ENCODE measurements at regions of chr1 and their contacts with region 1.

Region 1: GRCh38 chr1:7646981-7647901 is 123.9 kb upstream of the VAMP3 start:
- DNase-seq: peak; percentile 26
- H3K4me3 ChIP-seq: no peak overlapping the region
- H3K27ac ChIP-seq: no peak overlapping the region
- H3K4me1 ChIP-seq: peaks cover 7% of the 10 kb centered on the region
- H3K27me3 ChIP-seq: peaks cover 1% of the 10 kb centered on the region
- CTCF ChIP-seq: peak; percentile 61 to 93

Region 2: GRCh38 chr1:7042322-7043190 is 604.7 kb before region 1 on chr1:
- CTCF ChIA-PET with region 1: no interaction called
- dilution Hi-C with region 1: no loop called
- in situ Hi-C with region 1: loop called (anchors 25 kb)
- intact Hi-C with region 1: loop called (anchors 1 kb)
- DNase-seq: peak; percentile 24
- H3K4me3 ChIP-seq: no peak overlapping the region
- H3K27ac ChIP-seq: no peak overlapping the region
- H3K4me1 ChIP-seq: peaks cover 5% of the 10 kb centered on the region
- H3K27me3 ChIP-seq: no peaks in the 10 kb centered on the region
- CTCF ChIP-seq: peak; percentile 57 to 59

Region 3: DNA sequence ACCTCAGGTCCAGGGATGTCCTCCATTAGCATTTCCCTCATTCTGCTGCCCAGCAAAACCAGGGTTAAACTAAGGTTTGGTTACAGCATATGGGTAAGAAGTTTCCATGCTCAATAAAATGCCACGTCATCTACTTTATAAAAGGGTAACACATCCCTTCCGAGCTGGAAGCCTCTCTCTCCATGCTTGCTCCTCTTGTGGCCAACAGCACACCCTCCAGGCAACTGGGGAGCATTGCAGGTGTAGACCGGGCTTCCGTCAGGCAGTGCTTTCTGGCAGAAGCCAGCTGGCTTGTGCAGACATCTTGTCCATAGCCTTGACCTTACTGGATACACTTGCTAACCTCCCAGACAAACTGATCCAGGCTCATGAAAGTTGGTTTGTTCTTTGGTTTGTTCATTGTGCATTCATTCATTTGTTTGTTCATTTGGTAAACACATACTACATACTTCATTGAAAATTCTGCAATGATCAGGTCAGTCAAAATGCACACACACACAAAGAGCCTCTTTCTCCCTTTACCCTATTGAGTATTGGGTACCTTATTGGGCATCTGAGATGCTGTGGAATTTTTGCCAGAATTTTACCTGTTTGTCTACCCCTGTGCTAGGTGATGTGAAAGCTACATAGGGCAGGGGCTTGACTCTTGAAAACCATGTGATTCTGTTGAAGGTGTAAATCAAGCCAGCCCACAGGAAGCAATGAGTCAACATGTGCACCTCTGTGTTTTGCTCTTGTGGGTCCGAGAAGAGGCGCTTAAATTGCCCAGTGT is 439.2 kb before region 1 on chr1:
- CTCF ChIA-PET with region 1: no interaction called
- dilution Hi-C with region 1: no loop called
- in situ Hi-C with region 1: no loop called
- intact Hi-C with region 1: loop called (anchors 1 kb)
- DNase-seq: peak; percentile 64
- H3K4me3 ChIP-seq: no peak overlapping the region
- H3K27ac ChIP-seq: no peak overlapping the region
- H3K4me1 ChIP-seq: no peaks in the 10 kb centered on the region
- H3K27me3 ChIP-seq: no peaks in the 10 kb centered on the region
- CTCF ChIP-seq: peak; percentile 99

Region 4: GRCh38 chr1:7265771-7266648 is 381.2 kb before region 1 on chr1:
- CTCF ChIA-PET with region 1: no interaction called
- dilution Hi-C with region 1: no loop called
- in situ Hi-C with region 1: no loop called
- intact Hi-C with region 1: loop called (anchors 1 kb)
- DNase-seq: peak; percentile 98
- H3K4me3 ChIP-seq: peak overlapping the region in 2 of 3 experiments; percentile 9 to 12
- H3K27ac ChIP-seq: peak overlapping the region; percentile 94
- H3K4me1 ChIP-seq: peaks cover 35% of the 10 kb centered on the region
- H3K27me3 ChIP-seq: no peaks in the 10 kb centered on the region
- CTCF ChIP-seq: no peak

Region 5: DNA sequence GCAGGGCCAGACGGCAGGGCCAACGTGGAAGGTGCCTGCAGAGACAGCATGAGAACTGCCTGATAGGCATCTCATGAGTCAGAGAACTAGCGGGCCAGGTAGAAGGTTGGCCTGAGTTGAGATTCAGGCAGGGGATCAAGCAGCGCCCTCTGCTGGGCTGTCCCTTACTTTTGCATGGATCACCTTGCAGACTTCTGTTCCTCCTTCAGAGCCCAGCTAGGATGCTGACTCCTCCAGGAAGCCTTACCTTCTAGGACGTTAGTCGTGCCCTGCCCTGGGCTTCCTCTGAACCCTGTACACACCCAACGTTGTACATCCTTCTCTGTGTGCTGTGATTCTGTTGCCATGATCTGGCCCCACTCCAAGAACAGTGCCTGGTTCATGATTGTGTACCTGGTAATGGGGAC is 107.5 kb before region 1 on chr1:
- CTCF ChIA-PET with region 1: no interaction called
- dilution Hi-C with region 1: no loop called
- in situ Hi-C with region 1: no loop called
- intact Hi-C with region 1: loop called (anchors 1 kb)
- DNase-seq: peak; percentile 81
- H3K4me3 ChIP-seq: no peak overlapping the region
- H3K27ac ChIP-seq: no peak overlapping the region
- H3K4me1 ChIP-seq: no peaks in the 10 kb centered on the region
- H3K27me3 ChIP-seq: peaks cover 2% of the 10 kb centered on the region
- CTCF ChIP-seq: peak; percentile 77 to 94

Region 6: GRCh38 chr1:7623842-7624241 is 23.4 kb before region 1 on chr1:
- CTCF ChIA-PET with region 1: no interaction called
- dilution Hi-C with region 1: no loop called
- in situ Hi-C with region 1: no loop called
- intact Hi-C with region 1: no loop called
- DNase-seq: no peak
- H3K4me3 ChIP-seq: no peak overlapping the region
- H3K27ac ChIP-seq: no peak overlapping the region
- H3K4me1 ChIP-seq: no peaks in the 10 kb centered on the region
- H3K27me3 ChIP-seq: peaks cover 3% of the 10 kb centered on the region
- CTCF ChIP-seq: no peak